Psoas muscle (tissue), 8 donors: ENCODE measurements at regions of chr7 and their contacts with region 1.

Region 1: DNA sequence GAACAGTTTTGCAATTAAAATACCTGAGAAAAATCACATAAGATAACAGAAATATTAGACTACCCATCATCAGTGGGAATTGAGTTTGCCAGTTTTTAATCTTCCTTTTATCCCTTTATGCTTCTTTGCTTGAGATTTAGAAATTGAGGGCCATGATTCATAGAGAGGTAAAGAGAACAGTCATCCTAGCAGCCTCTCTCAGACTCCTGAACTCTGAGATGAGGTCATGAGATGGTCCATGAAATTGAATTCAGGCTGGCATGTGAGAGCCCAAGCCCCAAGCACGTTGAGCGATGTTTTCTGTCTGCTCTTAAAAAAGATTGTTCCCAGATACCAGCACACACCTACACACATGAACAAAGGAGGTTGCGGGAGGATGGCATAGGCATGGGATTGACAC is 91.1 kb downstream of the CREB5 start:
- DNase-seq: no peak
- ATAC-seq: no peak
- H3K4me3 ChIP-seq: no peak overlapping the region
- H3K27ac ChIP-seq: no peak overlapping the region
- H3K4me1 ChIP-seq: no peaks in the 10 kb centered on the region
- H3K27me3 ChIP-seq: no peaks in the 10 kb centered on the region
- CTCF ChIP-seq: no peak

Region 2: GRCh38 chr7:28458732-28459131 is 44.7 kb before region 1 on chr7:
- intact Hi-C with region 1: loop called in 1 of 2 experiments (anchors 5 kb)
- DNase-seq: peak; percentile 18 to 55
- ATAC-seq: no peak
- H3K4me3 ChIP-seq: no peak overlapping the region
- H3K27ac ChIP-seq: no peak overlapping the region
- H3K4me1 ChIP-seq: no peaks in the 10 kb centered on the region
- H3K27me3 ChIP-seq: no peaks in the 10 kb centered on the region
- CTCF ChIP-seq: no peak